Heart right ventricle (tissue), 16 donors: ENCODE measurements at regions of chr17 and their contacts with region 1.

Region 1: GRCh38 chr17:38428112-38428642 is at the start of gene ARHGAP23:
- DNase-seq: peak; percentile 77 to 80
- ATAC-seq: peak; percentile 53 to 76 (median 67)
- H3K4me3 ChIP-seq: peak within 1 kb of the TSS; percentile 80 to 99 (median 95)
- H3K27ac ChIP-seq: peak within 1 kb of the TSS; percentile 91 to 100 (median 96)
- H3K4me1 ChIP-seq: peaks cover 19 to 87% (median 67%) of the 10 kb centered on the region in 9 donors
- H3K27me3 ChIP-seq: peaks cover 0 to under 1% (median 0%) of the 10 kb centered on the region in 7 donors
- CTCF ChIP-seq: no peak
- total RNA-seq, gene ARHGAP23: 48.3 to 78.4 (median 68.0) TPM

Region 2: GRCh38 chr17:38444151-38444550 is 16.0 kb after region 1 on chr17:
- intact Hi-C with region 1: loop called in 1 of 10 experiments (anchors 2 kb)
- DNase-seq: peak; percentile 73 to 75
- ATAC-seq: peak; percentile 63 to 78 (median 70)
- H3K4me3 ChIP-seq: peak overlapping the region in 3 of 10 donors; percentile 9 to 17 (median 13)
- H3K27ac ChIP-seq: peak overlapping the region in 7 of 10 donors; percentile 70 to 91 (median 81)
- H3K4me1 ChIP-seq: peaks cover 17 to 81% (median 65%) of the 10 kb centered on the region in 9 donors
- H3K27me3 ChIP-seq: no peaks in the 10 kb centered on the region
- CTCF ChIP-seq: peak; percentile 80 to 96 (median 88)

Region 3: GRCh38 chr17:38464723-38465390 is 36.7 kb after region 1 on chr17:
- intact Hi-C with region 1: loop called in 2 of 10 experiments (anchors 5 kb)
- DNase-seq: peak; percentile 87 to 91
- ATAC-seq: peak; percentile 81 to 94 (median 88)
- H3K4me3 ChIP-seq: peak overlapping the region in 9 of 10 donors; percentile 42 to 59 (median 55)
- H3K27ac ChIP-seq: peak overlapping the region; percentile 87 to 99 (median 94)
- H3K4me1 ChIP-seq: peaks cover 36 to 94% (median 64%) of the 10 kb centered on the region in 9 donors
- H3K27me3 ChIP-seq: no peaks in the 10 kb centered on the region
- CTCF ChIP-seq: no peak